ENCODE measurements at regions of chr14 and their contacts with region 1.

Region 1: DNA sequence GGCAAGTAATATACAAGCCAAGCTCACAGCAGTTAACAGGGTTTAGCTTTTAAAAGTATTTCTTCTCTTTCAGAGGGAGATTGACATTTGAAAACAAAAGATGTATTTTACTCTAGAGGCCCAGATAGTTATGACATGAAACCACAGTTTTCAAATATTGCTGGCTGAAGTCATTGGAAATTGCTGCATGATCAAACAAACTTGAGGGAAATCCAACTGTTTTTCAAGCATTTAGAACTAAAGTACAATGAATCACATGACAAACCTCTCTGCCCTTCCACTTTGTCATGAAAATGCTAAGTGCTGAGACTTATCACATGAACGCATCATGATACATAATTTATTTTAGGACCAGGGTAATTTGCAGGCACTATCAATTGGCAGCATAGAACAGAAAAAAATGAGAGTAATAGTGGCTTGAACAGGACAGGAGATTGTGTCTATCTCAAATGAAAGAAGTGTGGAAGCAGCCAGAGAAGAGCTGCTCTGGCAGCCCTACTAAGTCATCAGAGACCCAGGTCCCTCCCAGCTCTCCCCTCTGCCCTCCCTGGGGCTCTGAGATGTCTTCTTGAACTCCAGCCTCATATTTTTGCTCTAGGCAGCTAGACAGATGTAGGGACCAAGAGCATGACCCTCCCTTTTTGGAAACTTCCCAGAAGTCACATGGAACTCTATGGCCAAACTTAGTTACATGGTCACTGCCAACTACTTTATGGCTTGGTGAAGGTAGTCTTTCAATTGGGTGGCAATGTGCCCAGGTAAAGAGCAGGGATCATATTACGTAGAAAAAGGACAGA is 90.1 kb upstream of the PELI2 start:
- DNase-seq: no peak
- ATAC-seq: no peak
- H3K4me3 ChIP-seq: no peak overlapping the region
- H3K4me3 Mint-ChIP-seq: no peak overlapping the region
- H3K27ac ChIP-seq: no peak overlapping the region
- H3K27ac Mint-ChIP-seq: no peak overlapping the region
- H3K4me1 ChIP-seq: no peaks in the 10 kb centered on the region
- H3K4me1 Mint-ChIP-seq: no peaks in the 10 kb centered on the region
- H3K27me3 ChIP-seq: no peaks in the 10 kb centered on the region
- H3K27me3 Mint-ChIP-seq: peaks cover 27% of the 10 kb centered on the region
- CTCF ChIP-seq: no peak

Region 2: GRCh38 chr14:55946231-55946630 is 81.9 kb before region 1 on chr14:
- CTCF ChIA-PET with region 1: no interaction called
- POLR2A ChIA-PET with region 1: no interaction called
- intact Hi-C with region 1: loop called in 1 of 2 experiments (anchors 5 kb)
- DNase-seq: no peak
- ATAC-seq: no peak
- H3K4me3 ChIP-seq: no peak overlapping the region
- H3K4me3 Mint-ChIP-seq: no peak overlapping the region
- H3K27ac ChIP-seq: no peak overlapping the region
- H3K27ac Mint-ChIP-seq: no peak overlapping the region
- H3K4me1 ChIP-seq: no peaks in the 10 kb centered on the region
- H3K4me1 Mint-ChIP-seq: no peaks in the 10 kb centered on the region
- H3K27me3 ChIP-seq: no peaks in the 10 kb centered on the region
- H3K27me3 Mint-ChIP-seq: peaks cover 7% of the 10 kb centered on the region
- CTCF ChIP-seq: no peak

Region 3: DNA sequence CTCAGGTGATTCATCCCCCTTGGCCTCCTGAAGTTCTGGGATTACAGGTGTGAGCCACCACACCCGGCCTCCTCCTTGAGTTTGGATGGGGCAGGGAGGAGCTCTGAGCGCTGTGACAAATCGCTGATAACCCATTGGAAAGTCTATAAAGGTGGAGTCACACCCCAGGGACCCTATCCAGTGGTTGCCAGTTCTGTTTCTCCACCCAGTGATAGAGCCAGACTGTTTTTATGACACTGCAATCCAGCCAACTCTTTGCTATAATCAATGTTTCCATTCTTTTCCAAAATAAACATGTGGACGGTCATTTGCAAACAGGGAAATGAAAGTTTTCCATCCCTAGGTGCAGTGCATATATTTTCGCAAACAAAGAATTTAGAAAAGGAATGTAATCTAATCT is 51.9 kb before region 1 on chr14:
- CTCF ChIA-PET with region 1: no interaction called
- POLR2A ChIA-PET with region 1: no interaction called
- intact Hi-C with region 1: no loop called
- DNase-seq: no peak
- ATAC-seq: no peak
- H3K4me3 ChIP-seq: no peak overlapping the region
- H3K4me3 Mint-ChIP-seq: no peak overlapping the region
- H3K27ac ChIP-seq: no peak overlapping the region
- H3K27ac Mint-ChIP-seq: no peak overlapping the region
- H3K4me1 ChIP-seq: no peaks in the 10 kb centered on the region
- H3K4me1 Mint-ChIP-seq: no peaks in the 10 kb centered on the region
- H3K27me3 ChIP-seq: no peaks in the 10 kb centered on the region
- H3K27me3 Mint-ChIP-seq: peaks cover 6% of the 10 kb centered on the region
- CTCF ChIP-seq: no peak

Measured in CD8-positive, alpha-beta T cell (primary cell).